ENCODE measurements at regions of chr6 and their contacts with region 1.

Region 1: DNA sequence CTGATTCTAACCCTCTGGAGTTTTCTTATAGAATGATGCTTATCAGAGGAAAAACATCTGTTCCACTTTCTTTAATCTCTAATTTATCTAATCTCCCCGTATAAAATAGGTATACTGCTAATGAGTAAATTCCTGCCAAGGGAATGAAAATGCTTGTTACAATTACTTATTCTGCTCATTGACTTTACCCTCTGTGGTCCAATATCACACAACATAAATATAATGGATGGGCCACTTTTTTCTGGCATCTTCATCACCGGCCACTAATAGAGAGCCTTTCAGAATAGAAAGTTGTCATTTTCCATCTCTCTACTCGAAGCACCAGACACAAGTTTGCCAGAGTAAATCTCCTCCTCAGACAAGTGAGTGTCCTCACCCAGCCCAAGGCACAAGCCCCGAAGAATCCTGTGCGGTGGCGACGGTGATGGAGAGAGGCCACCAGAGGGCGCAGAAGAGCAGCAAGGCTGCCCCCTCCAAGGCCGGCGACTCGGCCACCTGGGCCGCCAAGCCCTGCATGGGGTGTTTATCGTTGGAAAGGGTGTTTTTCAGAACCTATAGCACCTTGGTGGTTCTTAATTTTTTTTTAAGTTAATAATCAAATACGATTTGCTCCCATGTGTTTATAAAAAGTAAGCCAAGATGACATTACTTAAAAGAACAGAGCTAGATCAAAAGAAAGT is 212.9 kb upstream of the ARID1B start:
- DNase-seq: peak; percentile 52
- ATAC-seq: peak; percentile 99
- H3K4me3 ChIP-seq: no peak overlapping the region
- H3K27ac ChIP-seq: no peak overlapping the region
- H3K4me1 ChIP-seq: no peaks in the 10 kb centered on the region
- H3K27me3 ChIP-seq: peaks cover 0 to 15% of the 10 kb centered on the region in 2 experiments; a peak in 2 of 5 replicates
- CTCF ChIP-seq: peak; percentile 95
- EP300 ChIP-seq: no peak
- POLR2A ChIP-seq: no peak
- RAD21 ChIP-seq: peak; percentile 93

Region 2: DNA sequence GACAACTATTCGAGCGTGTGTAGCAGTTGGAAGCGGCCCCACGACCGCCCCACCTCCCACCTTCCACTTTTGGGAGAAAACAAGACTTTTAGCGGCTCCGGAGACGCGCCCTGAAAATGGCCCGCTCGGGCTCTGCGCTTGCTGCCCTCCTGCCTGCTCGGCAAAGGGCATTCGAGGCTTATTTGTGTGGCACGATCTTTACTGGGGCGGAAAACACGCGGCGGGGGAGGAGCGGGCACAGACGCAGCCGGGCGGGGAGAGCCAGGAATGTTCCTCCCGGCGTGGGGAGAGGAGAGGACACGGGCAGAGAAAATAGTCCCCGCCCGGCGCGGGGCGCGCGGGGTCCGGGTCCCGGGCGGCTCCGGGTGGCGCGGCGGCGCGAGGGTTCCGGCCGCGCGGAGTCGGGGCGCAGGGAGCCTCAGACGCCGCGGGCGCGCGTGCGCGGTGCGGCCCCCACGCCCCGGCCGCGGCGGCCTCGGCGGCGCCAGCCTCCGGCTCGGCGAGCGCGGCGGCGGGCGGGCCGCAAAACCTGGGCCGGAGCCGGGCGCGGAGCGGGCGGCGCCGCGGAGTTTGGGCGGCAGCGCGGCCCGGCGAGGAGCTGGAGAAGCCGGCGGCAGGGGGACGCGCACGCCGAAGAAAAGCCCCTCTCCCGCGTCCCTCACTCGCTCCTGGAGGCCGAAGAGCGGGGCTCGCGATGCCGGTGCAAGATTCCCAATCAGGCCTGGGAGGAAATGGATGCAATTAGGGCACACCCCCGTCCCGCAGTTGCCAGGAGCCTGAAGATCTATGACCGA is 122.9 kb after region 1 on chr6:
- CTCF ChIA-PET with region 1: interaction called, 3 read pairs
- POLR2A ChIA-PET with region 1: no interaction called
- in situ Hi-C with region 1: no loop called
- intact Hi-C with region 1: loop called (anchors 1 kb)
- DNase-seq: peak; percentile 40
- ATAC-seq: peak; percentile 91
- H3K4me3 ChIP-seq: peak overlapping the region; percentile 81 to 93 (median 86)
- H3K27ac ChIP-seq: peak overlapping the region; percentile 81
- H3K4me1 ChIP-seq: peaks cover 18% of the 10 kb centered on the region
- H3K27me3 ChIP-seq: peaks cover 0 to 33% of the 10 kb centered on the region in 2 experiments; a peak in 3 of 5 replicates
- CTCF ChIP-seq: 0 out of 2 replicates have a peak, but pooled peaks have one; percentile 3
- EP300 ChIP-seq: no peak
- POLR2A ChIP-seq: peak; percentile 64 to 84
- RAD21 ChIP-seq: peak; percentile 5

Region 3: GRCh38 chr6:156776840-156777576 is 212.7 kb after region 1 on chr6 and contains the start of gene ARID1B:
- CTCF ChIA-PET with region 1: no interaction called
- POLR2A ChIA-PET with region 1: no interaction called
- in situ Hi-C with region 1: loop called (anchors 25 kb)
- intact Hi-C with region 1: loop called (anchors 5 kb)
- DNase-seq: peak; percentile 70
- ATAC-seq: peak; percentile 77
- H3K4me3 ChIP-seq: peak within 1 kb of the TSS; percentile 72 to 95 (median 93)
- H3K27ac ChIP-seq: peak within 1 kb of the TSS; percentile 99
- H3K4me1 ChIP-seq: peaks cover 20% of the 10 kb centered on the region
- H3K27me3 ChIP-seq: no peaks in the 10 kb centered on the region; a peak in 1 of 5 replicates
- CTCF ChIP-seq: no peak
- EP300 ChIP-seq: 0 out of 4 replicates have a peak, but pooled peaks of 1 of the 2 experiments have one; percentile 3
- POLR2A ChIP-seq: peak; percentile 68 to 89
- RAD21 ChIP-seq: peak; percentile 57
- total RNA-seq, gene ARID1B: 32.6 and 38.0 TPM in 2 replicates

Region 4: DNA sequence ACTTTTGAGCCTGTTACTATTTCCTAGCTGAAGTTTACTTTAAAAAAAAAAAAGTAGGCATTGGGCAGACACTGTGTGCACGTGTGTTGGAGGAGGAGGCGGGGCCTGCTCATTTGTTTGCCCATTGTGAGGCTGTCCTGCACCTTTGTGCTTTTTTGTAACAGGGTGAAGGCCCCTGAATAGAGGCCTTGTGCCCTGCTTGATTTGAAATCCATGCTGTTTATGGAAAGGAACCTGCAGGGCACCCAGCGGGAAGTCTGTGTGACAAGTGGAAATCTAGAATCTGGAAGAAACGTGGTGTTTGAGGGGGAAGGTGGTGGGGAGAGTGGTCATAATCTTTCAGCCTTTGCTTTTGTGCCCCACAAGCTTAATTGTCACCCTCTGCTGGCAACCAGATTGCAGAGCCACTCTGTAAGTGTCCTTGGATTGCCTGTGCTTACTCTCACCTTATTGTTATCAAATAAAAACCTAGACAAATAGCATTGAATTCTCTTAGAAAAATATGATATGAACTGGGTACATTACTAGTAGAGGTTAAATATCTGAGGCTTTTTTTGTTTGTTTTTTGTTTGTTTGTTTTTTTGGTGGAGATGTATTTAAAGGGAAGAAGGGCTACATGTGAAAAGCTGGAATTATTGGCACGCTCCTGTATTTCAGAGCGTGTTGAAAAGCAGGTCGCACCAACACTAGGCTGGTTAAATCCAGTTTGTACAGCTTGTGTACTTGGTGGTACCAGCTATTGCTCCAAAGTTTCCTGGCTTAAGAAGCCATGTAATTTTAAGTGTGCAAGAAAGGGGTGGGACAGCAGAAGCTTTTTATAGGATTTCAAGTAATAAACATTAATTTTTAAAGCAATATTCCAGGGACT is 369.2 kb after region 1 on chr6:
- CTCF ChIA-PET with region 1: no interaction called
- POLR2A ChIA-PET with region 1: no interaction called
- in situ Hi-C with region 1: no loop called
- intact Hi-C with region 1: loop called (anchors 10 kb)
- DNase-seq: peak; percentile 93
- ATAC-seq: peak; percentile 99
- H3K4me3 ChIP-seq: peak overlapping the region in 2 of 3 experiments; percentile 30 to 31; a peak in 2 of 6 replicates
- H3K27ac ChIP-seq: peak overlapping the region; percentile 81
- H3K4me1 ChIP-seq: peaks cover 38% of the 10 kb centered on the region
- H3K27me3 ChIP-seq: no peaks in the 10 kb centered on the region
- CTCF ChIP-seq: peak; percentile 60
- EP300 ChIP-seq: peak in 1 of 2 experiments; percentile 59; a peak in 2 of 4 replicates
- POLR2A ChIP-seq: 0 out of 4 replicates have a peak, but pooled peaks of 1 of the 2 experiments have one; percentile 20
- RAD21 ChIP-seq: 0 out of 2 replicates have a peak, but pooled peaks have one; percentile 19